CD8-positive, alpha-beta T cell (primary cell): ENCODE measurements at regions of chr7 and their contacts with region 1.

Region 1: DNA sequence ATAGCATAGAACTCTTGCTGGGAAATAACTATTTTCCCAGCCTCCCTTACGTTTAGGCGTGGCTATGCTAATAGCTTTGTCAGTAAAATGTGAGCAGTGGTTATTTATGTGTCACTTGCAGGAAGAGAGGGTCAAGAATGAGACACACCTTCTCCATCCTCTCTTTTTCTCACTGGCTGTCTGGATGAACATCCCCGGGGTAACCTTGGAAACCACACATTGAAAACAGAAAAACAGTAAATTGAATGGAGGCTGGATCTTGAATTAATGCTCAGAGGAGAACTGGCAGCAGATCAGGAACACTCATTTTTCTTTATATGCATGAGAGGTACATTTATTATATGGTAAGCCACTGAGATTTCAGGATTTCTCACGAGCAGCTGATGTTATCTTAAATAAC is 127.6 kb downstream of the DNAJB9 start:
- DNase-seq: no peak
- ATAC-seq: no peak
- H3K4me3 ChIP-seq: no peak overlapping the region
- H3K4me3 Mint-ChIP-seq: no peak overlapping the region
- H3K27ac ChIP-seq: no peak overlapping the region
- H3K27ac Mint-ChIP-seq: no peak overlapping the region
- H3K4me1 ChIP-seq: no peaks in the 10 kb centered on the region
- H3K4me1 Mint-ChIP-seq: no peaks in the 10 kb centered on the region
- H3K27me3 ChIP-seq: no peaks in the 10 kb centered on the region
- H3K27me3 Mint-ChIP-seq: peaks cover 2% of the 10 kb centered on the region
- CTCF ChIP-seq: no peak

Region 2: GRCh38 chr7:109939207-109939606 is 1242.0 kb after region 1 on chr7:
- CTCF ChIA-PET with region 1: no interaction called
- POLR2A ChIA-PET with region 1: no interaction called
- intact Hi-C with region 1: loop called in 1 of 2 experiments (anchors 5 kb)
- DNase-seq: no peak
- ATAC-seq: no peak
- H3K4me3 ChIP-seq: no peak overlapping the region
- H3K4me3 Mint-ChIP-seq: no peak overlapping the region
- H3K27ac ChIP-seq: no peak overlapping the region
- H3K27ac Mint-ChIP-seq: no peak overlapping the region
- H3K4me1 ChIP-seq: no peaks in the 10 kb centered on the region
- H3K4me1 Mint-ChIP-seq: no peaks in the 10 kb centered on the region
- H3K27me3 ChIP-seq: no peaks in the 10 kb centered on the region
- H3K27me3 Mint-ChIP-seq: no peaks in the 10 kb centered on the region
- CTCF ChIP-seq: no peak